ENCODE measurements at regions of chr10 and their contacts with region 1.

Region 1: DNA sequence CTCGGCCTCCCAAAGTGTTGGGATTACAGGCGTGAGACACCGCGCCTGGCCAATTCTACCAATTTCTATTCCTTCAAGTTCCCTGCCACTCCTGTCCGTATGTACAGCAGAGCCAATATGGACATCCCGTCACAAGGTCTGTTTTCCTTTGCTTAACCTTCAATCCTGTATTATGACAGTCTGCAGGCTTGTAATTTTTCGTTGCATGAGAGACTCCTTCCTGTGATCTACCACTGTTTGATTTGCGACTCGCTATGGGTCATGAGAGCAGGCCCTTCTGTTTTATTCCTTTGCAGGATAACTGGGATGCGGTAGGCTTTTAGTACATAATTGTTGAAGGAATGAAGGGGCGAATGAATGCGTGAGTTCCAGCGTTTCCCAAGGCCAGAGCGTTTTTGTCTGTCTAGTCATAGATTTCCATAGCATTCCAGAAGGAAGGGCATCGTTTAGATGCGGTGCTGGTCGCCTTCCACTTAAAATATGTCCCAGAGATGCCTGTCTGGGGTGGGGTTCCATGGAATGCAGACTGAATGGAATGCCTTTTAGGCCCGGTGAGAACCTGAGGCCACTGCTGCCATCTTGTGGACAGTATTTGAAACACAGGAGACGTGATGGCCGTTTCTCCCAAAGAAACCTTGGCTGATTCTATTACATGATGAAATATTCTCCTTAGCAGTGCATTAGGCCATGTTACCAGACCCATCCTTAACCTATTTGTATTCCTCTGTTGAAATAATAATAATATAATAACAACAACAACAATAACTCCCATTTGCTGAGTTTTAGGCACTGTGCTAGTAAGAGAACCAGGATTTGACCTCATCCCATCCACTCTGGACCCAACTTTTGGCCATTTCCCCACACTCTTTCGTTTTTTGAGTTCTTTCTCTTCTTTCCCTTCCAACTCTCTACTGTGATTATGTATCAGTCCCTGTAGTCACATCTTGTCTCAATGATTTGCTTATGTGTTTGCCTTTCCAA is 193.2 kb downstream of the MYOF start:
- DNase-seq: peak; percentile 78
- H3K4me3 Mint-ChIP-seq: no peak overlapping the region
- H3K27ac Mint-ChIP-seq: peak overlapping the region; percentile 38
- H3K4me1 Mint-ChIP-seq: peaks cover 25% of the 10 kb centered on the region
- H3K27me3 Mint-ChIP-seq: no peaks in the 10 kb centered on the region
- CTCF ChIP-seq: peak; percentile 56

Region 2: GRCh38 chr10:92880233-92880861 is 408.6 kb before region 1 on chr10:
- CTCF ChIA-PET with region 1: no interaction called
- intact Hi-C with region 1: no loop called
- DNase-seq: peak; percentile 19
- H3K4me3 Mint-ChIP-seq: no peak overlapping the region
- H3K27ac Mint-ChIP-seq: no peak overlapping the region
- H3K4me1 Mint-ChIP-seq: peaks cover 22% of the 10 kb centered on the region
- H3K27me3 Mint-ChIP-seq: no peaks in the 10 kb centered on the region
- CTCF ChIP-seq: peak; percentile 49

Region 3: DNA sequence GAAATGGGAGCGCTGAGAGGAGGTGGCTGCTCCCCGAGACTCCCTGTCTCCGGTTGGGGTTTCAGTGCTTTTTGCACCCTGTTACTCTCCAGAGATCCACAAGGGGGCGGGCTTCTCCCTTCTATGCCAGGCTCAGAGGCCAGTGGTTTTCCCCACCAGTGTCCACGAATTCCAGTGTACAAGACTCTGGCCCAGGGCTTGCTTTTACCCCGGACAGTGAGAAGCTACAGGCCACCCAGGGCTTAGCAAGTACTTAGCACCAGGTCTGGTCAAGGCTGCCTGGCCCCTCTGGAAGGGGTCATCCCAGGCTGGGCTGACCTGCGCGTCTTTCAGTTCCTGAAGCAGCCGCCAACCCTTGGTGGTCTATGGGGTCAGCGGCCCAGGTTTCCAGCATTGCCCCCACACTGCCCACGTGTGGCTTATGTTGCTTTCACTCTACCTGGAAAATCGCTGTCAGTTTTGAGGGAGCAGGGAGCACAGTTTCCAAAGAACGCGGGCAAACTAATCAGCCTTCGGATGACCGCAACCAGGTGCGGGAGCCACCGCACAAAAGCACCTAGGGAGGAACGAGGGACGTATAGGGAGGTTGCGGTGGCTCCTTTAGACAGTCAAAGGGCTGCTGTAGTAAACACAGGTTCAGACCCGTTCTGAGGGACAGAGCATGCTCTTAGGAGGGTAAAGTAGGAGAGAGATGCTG is 208.4 kb before region 1 on chr10:
- CTCF ChIA-PET with region 1: interaction called, 3 read pairs
- intact Hi-C with region 1: loop called (anchors 1 kb)
- DNase-seq: peak; percentile 66
- H3K4me3 Mint-ChIP-seq: no peak overlapping the region
- H3K27ac Mint-ChIP-seq: no peak overlapping the region
- H3K4me1 Mint-ChIP-seq: peaks cover 17% of the 10 kb centered on the region
- H3K27me3 Mint-ChIP-seq: no peaks in the 10 kb centered on the region
- CTCF ChIP-seq: peak; percentile 72

Region 4: GRCh38 chr10:93115661-93116383 is 173.1 kb before region 1 on chr10:
- CTCF ChIA-PET with region 1: no interaction called
- intact Hi-C with region 1: loop called (anchors 1 kb)
- DNase-seq: peak; percentile 75
- H3K4me3 Mint-ChIP-seq: no peak overlapping the region
- H3K27ac Mint-ChIP-seq: no peak overlapping the region
- H3K4me1 Mint-ChIP-seq: no peaks in the 10 kb centered on the region
- H3K27me3 Mint-ChIP-seq: peaks cover 16% of the 10 kb centered on the region
- CTCF ChIP-seq: peak; percentile 29

Region 5: DNA sequence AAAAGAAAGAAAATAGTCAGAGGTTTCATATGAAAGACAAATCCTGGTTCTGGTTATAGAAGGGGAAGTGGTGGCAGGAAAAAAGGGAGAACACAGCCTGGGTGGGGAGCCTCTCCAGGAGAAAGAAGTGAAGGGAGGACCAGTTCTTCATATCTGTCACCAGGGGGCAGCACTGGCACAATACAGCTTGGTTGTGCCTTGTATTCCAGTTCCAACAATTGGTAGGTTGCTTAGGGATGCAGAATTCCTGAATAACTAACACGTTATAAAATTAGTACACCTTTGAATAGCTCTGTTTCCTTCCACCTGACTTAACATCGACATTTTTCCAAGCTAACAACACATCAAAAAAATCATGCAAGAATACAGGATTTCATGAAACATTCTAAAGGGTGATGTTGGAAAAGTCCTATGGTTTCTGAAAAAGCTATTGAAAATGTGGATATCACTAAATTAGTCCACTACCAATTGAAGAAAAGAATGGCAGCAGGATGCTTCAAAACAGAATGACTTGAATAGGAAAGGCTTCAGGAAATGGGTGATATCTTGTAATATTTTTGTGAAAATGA is 162.4 kb before region 1 on chr10:
- CTCF ChIA-PET with region 1: interaction called, 11 read pairs
- intact Hi-C with region 1: no loop called
- DNase-seq: no peak
- H3K4me3 Mint-ChIP-seq: no peak overlapping the region
- H3K27ac Mint-ChIP-seq: peak overlapping the region; percentile 36
- H3K4me1 Mint-ChIP-seq: peaks cover 32% of the 10 kb centered on the region
- H3K27me3 Mint-ChIP-seq: no peaks in the 10 kb centered on the region
- CTCF ChIP-seq: peak; percentile 32

Region 6: DNA sequence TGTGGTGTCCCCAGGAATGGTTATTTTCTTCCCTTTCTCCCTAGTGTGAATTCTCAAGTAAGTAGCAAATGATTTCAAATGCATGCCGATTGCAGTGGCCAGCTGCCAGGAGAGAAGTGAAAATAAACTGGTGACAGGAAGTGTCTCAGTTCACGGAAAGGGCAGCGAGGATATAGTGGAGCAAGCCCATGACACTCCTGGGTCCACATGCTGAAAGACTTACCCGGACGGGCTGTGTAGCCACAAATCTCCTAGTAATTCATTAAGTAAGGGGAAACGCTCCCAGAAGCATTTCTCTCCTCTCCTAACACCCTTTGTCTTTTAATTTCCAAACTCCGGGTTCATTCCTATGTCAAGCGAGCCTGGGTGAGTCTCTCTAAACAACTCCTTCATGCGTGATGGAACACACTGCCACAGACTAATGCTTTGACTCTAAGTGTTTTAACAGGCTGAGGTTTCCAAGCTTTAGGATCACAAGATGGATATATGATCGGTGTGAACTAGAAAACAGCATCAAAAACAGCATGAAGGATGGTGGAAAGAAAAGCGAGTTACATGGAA is 89.7 kb before region 1 on chr10:
- CTCF ChIA-PET with region 1: no interaction called
- intact Hi-C with region 1: loop called (anchors 5 kb)
- DNase-seq: peak; percentile 51
- H3K4me3 Mint-ChIP-seq: peak overlapping the region; percentile 47
- H3K27ac Mint-ChIP-seq: peak overlapping the region; percentile 83
- H3K4me1 Mint-ChIP-seq: peaks cover 25% of the 10 kb centered on the region
- H3K27me3 Mint-ChIP-seq: no peaks in the 10 kb centered on the region
- CTCF ChIP-seq: no peak

Region 7: GRCh38 chr10:93235686-93236085 is 53.3 kb before region 1 on chr10:
- CTCF ChIA-PET with region 1: no interaction called
- intact Hi-C with region 1: no loop called
- DNase-seq: no peak
- H3K4me3 Mint-ChIP-seq: no peak overlapping the region
- H3K27ac Mint-ChIP-seq: no peak overlapping the region
- H3K4me1 Mint-ChIP-seq: no peaks in the 10 kb centered on the region
- H3K27me3 Mint-ChIP-seq: no peaks in the 10 kb centered on the region
- CTCF ChIP-seq: no peak

Region 8: DNA sequence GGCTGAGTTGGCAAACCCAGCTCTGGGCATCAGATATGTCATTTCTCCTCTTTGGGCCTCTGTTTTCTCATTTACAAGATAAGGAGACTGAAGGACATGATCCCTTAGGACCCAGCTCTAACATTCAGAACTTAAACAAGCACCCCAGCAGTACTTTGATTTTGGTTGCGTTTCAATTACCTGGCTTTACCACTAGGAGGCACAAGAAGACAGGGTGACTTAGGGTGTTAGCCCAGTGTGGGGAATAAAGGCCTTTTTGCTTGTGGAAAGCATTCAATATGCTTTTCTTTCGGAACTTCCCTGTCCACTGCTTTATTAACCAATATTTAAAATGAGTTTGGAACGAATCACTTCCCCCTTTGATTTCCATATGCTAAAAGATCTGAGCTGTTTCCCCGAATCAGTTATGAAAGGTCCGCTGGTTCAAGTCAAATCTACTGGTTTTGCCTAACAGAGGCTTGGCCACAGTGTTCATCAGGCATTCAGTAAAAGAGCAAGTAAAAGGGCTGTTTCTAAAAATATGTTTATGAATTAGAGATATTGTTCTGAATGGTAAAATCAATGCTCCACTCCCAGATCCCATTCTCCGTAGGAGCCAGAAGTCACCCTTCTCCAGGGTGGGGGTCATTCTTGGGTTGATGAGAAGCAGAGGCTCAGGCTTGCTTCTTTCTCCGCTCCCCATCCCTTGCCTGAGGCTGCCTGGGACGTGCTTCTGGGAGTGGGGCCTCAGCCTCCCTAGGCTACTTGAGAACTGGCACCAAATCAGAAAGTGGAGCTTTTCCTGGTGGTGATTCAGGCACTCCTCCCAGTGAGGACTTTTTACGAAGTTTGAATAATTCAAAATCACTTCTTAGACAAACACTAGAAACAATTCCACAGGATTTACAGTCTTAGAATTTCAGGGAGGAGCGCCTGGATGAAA is 87.7 kb after region 1 on chr10:
- CTCF ChIA-PET with region 1: no interaction called
- intact Hi-C with region 1: no loop called
- DNase-seq: peak; percentile 54
- H3K4me3 Mint-ChIP-seq: no peak overlapping the region
- H3K27ac Mint-ChIP-seq: peak overlapping the region; percentile 82
- H3K4me1 Mint-ChIP-seq: peaks cover 23% of the 10 kb centered on the region
- H3K27me3 Mint-ChIP-seq: no peaks in the 10 kb centered on the region
- CTCF ChIP-seq: peak; percentile 73